ENCODE measurements at regions of chr6 and their contacts with region 1.

Region 1: GRCh38 chr6:161370880-161371279 is 97.0 kb upstream of the AGPAT4 start:
- DNase-seq: peak; percentile 62
- H3K4me3 ChIP-seq: no peak overlapping the region
- H3K27ac ChIP-seq: no peak overlapping the region
- H3K4me1 ChIP-seq: no peaks in the 10 kb centered on the region
- H3K27me3 ChIP-seq: no peaks in the 10 kb centered on the region
- CTCF ChIP-seq: peak; percentile 89 to 91
- POLR2A ChIP-seq: no peak

Region 2: DNA sequence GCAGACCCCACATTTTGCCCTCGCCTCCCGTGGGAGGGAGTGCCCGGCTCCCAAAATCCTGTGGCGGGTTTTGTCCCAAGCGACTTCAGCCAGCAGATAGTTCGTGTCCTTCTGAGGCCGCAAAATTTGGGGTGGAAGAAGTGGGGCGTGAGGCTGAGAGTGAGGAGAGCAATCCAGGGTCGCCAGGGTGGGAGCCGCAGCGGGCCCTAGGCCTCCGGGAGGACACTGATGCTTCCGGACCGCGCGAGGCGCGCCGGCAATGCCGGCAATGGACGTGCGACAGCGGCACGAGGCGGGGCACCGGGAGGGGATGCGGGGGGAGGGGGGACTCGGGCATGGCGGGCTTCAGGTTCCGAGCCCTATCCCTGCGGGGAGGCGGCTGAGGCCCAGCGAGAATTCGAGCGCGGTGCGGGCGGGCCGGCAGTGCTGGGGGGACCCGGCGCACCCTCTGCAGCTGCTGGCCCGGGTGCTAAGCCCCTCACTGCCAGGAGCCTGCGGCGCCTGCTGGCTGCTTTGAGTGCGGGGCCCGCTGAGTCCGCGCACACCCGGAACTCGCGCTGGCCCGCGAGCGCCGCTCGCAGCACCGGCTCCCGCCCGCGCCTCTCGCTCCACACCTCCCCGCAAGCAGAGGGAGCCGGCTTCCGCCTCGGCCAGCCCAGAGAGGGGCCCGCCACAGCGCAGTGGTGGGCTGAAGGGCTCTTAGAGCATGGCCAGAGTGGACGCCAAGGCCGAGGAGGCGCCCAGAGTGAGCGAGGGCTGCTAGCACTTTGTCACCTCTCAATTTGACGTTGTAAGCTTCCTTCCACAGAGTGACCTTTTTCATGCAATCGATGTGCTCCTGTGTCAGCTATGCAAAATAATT is 850.6 kb before region 1 on chr6:
- CTCF ChIA-PET with region 1: interaction called, 42 read pairs
- POLR2A ChIA-PET with region 1: no interaction called
- dilution Hi-C with region 1: no loop called
- intact Hi-C with region 1: loop called (anchors 1 kb)
- DNase-seq: peak; percentile 25
- H3K4me3 ChIP-seq: peak overlapping the region; percentile 18 to 55 (median 41)
- H3K27ac ChIP-seq: no peak overlapping the region
- H3K4me1 ChIP-seq: peaks cover 4% of the 10 kb centered on the region
- H3K27me3 ChIP-seq: peaks cover 0 to 8% of the 10 kb centered on the region in 2 experiments
- CTCF ChIP-seq: peak; percentile 80 to 91
- POLR2A ChIP-seq: no peak

Region 3: GRCh38 chr6:160992061-160992979 is 378.6 kb before region 1 on chr6:
- CTCF ChIA-PET with region 1: interaction called, 41 read pairs
- POLR2A ChIA-PET with region 1: no interaction called
- dilution Hi-C with region 1: no loop called
- intact Hi-C with region 1: loop called (anchors 1 kb)
- DNase-seq: peak; percentile 78
- H3K4me3 ChIP-seq: peak overlapping the region; percentile 80 to 88 (median 80)
- H3K27ac ChIP-seq: peak overlapping the region; percentile 49
- H3K4me1 ChIP-seq: peaks cover 14% of the 10 kb centered on the region
- H3K27me3 ChIP-seq: no peaks in the 10 kb centered on the region
- CTCF ChIP-seq: peak; percentile 43 to 66
- POLR2A ChIP-seq: no peak

Region 4: DNA sequence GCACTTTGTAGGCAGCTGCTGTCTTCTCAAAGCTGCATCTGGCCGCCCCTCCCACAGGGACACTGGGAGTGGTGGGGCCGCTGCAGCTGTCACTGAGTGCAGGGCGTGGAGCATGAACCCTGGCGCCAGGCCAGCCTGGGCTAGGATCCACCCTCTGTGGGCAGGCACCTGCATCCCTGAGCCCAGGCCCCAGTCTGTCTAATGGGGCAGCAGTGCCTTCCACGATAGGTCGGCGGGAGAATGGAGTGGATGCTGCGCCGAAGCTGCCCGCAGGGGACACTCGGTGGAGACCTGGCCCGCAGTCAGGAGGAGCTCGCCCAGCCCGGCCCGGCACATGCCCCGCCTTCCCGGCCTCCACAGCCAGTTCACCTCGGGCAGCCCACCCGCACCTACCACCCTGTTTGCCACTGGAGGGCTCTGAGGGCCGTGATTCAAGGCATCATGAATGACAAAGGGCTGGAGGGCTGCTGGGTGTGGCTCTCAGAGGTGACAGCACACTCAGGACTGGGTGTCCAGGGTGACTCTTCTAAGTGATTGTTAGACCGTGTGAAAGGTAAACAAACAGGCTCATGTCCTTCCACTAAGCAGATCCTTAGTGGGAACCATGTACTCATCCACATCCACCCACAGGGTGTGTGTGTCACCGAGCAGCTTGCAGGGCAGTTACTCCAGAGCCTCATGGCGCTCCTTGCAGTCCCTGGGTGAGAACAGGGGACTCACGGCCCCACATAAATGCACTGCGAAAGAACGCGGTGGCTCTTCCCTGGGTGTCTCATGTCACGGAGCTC is 230.9 kb before region 1 on chr6:
- CTCF ChIA-PET with region 1: interaction called, 12 read pairs
- POLR2A ChIA-PET with region 1: no interaction called
- dilution Hi-C with region 1: no loop called
- intact Hi-C with region 1: no loop called
- DNase-seq: no peak
- H3K4me3 ChIP-seq: no peak overlapping the region
- H3K27ac ChIP-seq: no peak overlapping the region
- H3K4me1 ChIP-seq: no peaks in the 10 kb centered on the region
- H3K27me3 ChIP-seq: no peaks in the 10 kb centered on the region
- CTCF ChIP-seq: no peak
- POLR2A ChIP-seq: no peak

Region 5: GRCh38 chr6:161273752-161274487 is 97.0 kb before region 1 on chr6 and contains the start of gene AGPAT4:
- CTCF ChIA-PET with region 1: interaction called, 17 read pairs
- POLR2A ChIA-PET with region 1: no interaction called
- dilution Hi-C with region 1: no loop called
- intact Hi-C with region 1: loop called (anchors 2 kb)
- DNase-seq: peak; percentile 98
- H3K4me3 ChIP-seq: peak within 1 kb of the TSS; percentile 71 to 82 (median 72)
- H3K27ac ChIP-seq: peak within 1 kb of the TSS; percentile 87
- H3K4me1 ChIP-seq: peaks cover 16% of the 10 kb centered on the region
- H3K27me3 ChIP-seq: no peaks in the 10 kb centered on the region
- CTCF ChIP-seq: no peak
- POLR2A ChIP-seq: peak; percentile 63
- total RNA-seq, gene AGPAT4: 15.2 and 15.4 TPM in 2 replicates

Region 6: DNA sequence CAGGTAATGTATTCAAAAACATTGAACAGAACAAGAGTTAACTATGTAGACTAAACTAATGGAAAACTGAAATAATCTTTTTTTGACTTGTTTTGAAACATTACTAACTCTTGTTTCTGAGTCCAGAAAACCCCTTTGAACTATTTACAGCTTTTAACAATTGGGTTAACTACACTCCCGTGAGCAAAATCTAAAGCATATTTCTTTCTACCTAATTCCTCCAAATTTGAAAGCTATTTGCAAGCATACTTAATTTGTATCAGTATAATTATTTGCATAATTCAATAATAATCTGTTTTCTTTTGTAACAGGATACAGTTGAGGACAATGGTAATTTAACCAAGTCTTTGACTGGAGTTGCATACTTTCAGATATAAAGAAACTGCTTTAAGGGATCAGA is 34.4 kb before region 1 on chr6:
- CTCF ChIA-PET with region 1: no interaction called
- POLR2A ChIA-PET with region 1: no interaction called
- dilution Hi-C with region 1: no loop called
- intact Hi-C with region 1: no loop called
- DNase-seq: no peak
- H3K4me3 ChIP-seq: no peak overlapping the region
- H3K27ac ChIP-seq: no peak overlapping the region
- H3K4me1 ChIP-seq: no peaks in the 10 kb centered on the region
- H3K27me3 ChIP-seq: no peaks in the 10 kb centered on the region
- CTCF ChIP-seq: no peak
- POLR2A ChIP-seq: no peak